CD4-positive, alpha-beta T cell (primary cell): ENCODE measurements at regions of chr18 and their contacts with region 1.

Region 1: GRCh38 chr18:76349067-76349715 is 145.9 kb downstream of the ZNF516 start:
- DNase-seq: peak; percentile 42 to 76 (median 46)
- ATAC-seq: peak; percentile 52
- H3K4me3 ChIP-seq: no peak overlapping the region
- H3K4me3 Mint-ChIP-seq: no peak overlapping the region
- H3K27ac ChIP-seq: no peak overlapping the region
- H3K27ac Mint-ChIP-seq: no peak overlapping the region
- H3K4me1 ChIP-seq: peaks cover 3% of the 10 kb centered on the region
- H3K4me1 Mint-ChIP-seq: peaks cover 7% of the 10 kb centered on the region
- H3K27me3 ChIP-seq: no peaks in the 10 kb centered on the region
- H3K27me3 Mint-ChIP-seq: no peaks in the 10 kb centered on the region
- CTCF ChIP-seq: peak; percentile 92

Region 2: DNA sequence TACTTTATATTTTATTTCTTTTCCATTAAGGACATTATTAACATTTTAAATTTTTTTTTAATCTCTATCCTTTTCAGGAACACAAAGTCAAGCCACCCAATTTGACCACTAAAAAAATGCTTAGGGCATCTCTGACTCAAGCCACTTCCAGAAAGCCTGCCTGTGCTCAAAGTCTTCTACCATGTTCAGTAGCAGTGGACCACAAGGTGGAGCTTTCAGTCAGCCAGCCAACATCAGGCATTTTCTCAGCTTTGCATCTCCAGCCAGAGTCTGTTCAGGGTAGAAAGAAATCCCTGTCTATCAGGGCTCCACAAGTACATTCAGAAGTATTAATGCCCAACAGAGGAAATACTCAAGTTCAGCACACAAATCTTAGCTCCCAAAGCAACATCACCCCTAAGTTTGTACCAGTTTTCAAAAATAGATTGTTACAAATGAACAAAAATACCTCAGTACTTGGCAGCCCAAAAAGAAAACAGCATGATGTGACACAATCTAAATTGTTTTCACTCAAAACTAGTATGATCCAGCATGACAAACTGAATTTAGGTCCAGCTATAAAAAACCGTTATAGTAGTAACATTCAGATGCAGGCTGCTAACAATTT is 1995.9 kb before region 1 on chr18:
- CTCF ChIA-PET with region 1: no interaction called
- POLR2A ChIA-PET with region 1: no interaction called
- intact Hi-C with region 1: loop called in 1 of 2 experiments (anchors 5 kb)
- DNase-seq: peak; percentile 35 to 85 (median 52)
- ATAC-seq: peak; percentile 88
- H3K4me3 ChIP-seq: no peak overlapping the region
- H3K4me3 Mint-ChIP-seq: no peak overlapping the region
- H3K27ac ChIP-seq: no peak overlapping the region
- H3K27ac Mint-ChIP-seq: no peak overlapping the region
- H3K4me1 ChIP-seq: peaks cover 2% of the 10 kb centered on the region
- H3K4me1 Mint-ChIP-seq: peaks cover 5% of the 10 kb centered on the region
- H3K27me3 ChIP-seq: no peaks in the 10 kb centered on the region
- H3K27me3 Mint-ChIP-seq: no peaks in the 10 kb centered on the region
- CTCF ChIP-seq: peak; percentile 85

Region 3: GRCh38 chr18:75478996-75479880 is 870.0 kb before region 1 on chr18:
- CTCF ChIA-PET with region 1: no interaction called
- POLR2A ChIA-PET with region 1: no interaction called
- intact Hi-C with region 1: loop called in 1 of 2 experiments (anchors 10 kb)
- DNase-seq: peak in 3 of 14 experiments; percentile 53 to 70 (median 68)
- ATAC-seq: peak; percentile 39
- H3K4me3 ChIP-seq: no peak overlapping the region
- H3K4me3 Mint-ChIP-seq: no peak overlapping the region
- H3K27ac ChIP-seq: no peak overlapping the region
- H3K27ac Mint-ChIP-seq: no peak overlapping the region
- H3K4me1 ChIP-seq: no peaks in the 10 kb centered on the region
- H3K4me1 Mint-ChIP-seq: no peaks in the 10 kb centered on the region
- H3K27me3 ChIP-seq: peaks cover 5 to 8% of the 10 kb centered on the region in 2 experiments
- H3K27me3 Mint-ChIP-seq: peaks cover 20% of the 10 kb centered on the region
- CTCF ChIP-seq: peak; percentile 67

Region 4: GRCh38 chr18:75884728-75885127 is 464.5 kb before region 1 on chr18:
- CTCF ChIA-PET with region 1: no interaction called
- POLR2A ChIA-PET with region 1: no interaction called
- intact Hi-C with region 1: loop called in 1 of 2 experiments (anchors 5 kb)
- DNase-seq: no peak
- ATAC-seq: no peak
- H3K4me3 ChIP-seq: no peak overlapping the region
- H3K4me3 Mint-ChIP-seq: no peak overlapping the region
- H3K27ac ChIP-seq: no peak overlapping the region
- H3K27ac Mint-ChIP-seq: no peak overlapping the region
- H3K4me1 ChIP-seq: no peaks in the 10 kb centered on the region
- H3K4me1 Mint-ChIP-seq: no peaks in the 10 kb centered on the region
- H3K27me3 ChIP-seq: no peaks in the 10 kb centered on the region
- H3K27me3 Mint-ChIP-seq: no peaks in the 10 kb centered on the region
- CTCF ChIP-seq: no peak

Region 5: DNA sequence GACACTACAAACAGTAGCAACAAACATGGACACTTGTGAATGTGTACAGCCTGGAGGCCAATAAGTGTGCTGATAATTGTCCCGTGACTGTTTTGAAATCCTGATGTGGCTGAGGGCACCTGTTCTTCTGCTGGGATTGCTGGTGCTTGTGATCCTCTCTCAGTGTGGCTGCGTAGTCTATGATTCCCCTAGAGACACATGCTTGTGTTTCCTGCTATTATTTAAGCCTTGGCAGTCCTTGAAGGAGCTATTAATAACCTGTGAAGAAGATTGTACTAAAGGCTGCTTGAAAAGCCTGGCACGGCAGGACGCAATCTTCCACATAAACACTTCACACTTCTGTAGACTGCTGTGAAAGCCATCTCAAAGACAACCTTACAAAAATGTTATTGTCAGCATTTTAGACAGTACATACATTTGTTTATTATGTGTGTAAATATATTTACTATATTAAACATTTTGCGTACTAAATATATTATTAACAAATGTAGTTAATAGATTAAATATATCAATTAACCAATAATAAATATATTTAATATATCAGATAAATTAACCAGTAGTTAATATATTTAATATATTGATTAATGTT is 971.9 kb after region 1 on chr18:
- CTCF ChIA-PET with region 1: no interaction called
- POLR2A ChIA-PET with region 1: no interaction called
- intact Hi-C with region 1: no loop called
- DNase-seq: no peak
- ATAC-seq: no peak
- H3K4me3 ChIP-seq: no peak overlapping the region
- H3K4me3 Mint-ChIP-seq: no peak overlapping the region
- H3K27ac ChIP-seq: no peak overlapping the region
- H3K27ac Mint-ChIP-seq: no peak overlapping the region
- H3K4me1 ChIP-seq: no peaks in the 10 kb centered on the region
- H3K4me1 Mint-ChIP-seq: no peaks in the 10 kb centered on the region
- H3K27me3 ChIP-seq: peaks cover 8 to 14% of the 10 kb centered on the region in 2 experiments
- H3K27me3 Mint-ChIP-seq: peaks cover 40% of the 10 kb centered on the region
- CTCF ChIP-seq: no peak